SK-N-SH (cell line): ENCODE measurements at regions of chr2 and their contacts with region 1.

Region 1: DNA sequence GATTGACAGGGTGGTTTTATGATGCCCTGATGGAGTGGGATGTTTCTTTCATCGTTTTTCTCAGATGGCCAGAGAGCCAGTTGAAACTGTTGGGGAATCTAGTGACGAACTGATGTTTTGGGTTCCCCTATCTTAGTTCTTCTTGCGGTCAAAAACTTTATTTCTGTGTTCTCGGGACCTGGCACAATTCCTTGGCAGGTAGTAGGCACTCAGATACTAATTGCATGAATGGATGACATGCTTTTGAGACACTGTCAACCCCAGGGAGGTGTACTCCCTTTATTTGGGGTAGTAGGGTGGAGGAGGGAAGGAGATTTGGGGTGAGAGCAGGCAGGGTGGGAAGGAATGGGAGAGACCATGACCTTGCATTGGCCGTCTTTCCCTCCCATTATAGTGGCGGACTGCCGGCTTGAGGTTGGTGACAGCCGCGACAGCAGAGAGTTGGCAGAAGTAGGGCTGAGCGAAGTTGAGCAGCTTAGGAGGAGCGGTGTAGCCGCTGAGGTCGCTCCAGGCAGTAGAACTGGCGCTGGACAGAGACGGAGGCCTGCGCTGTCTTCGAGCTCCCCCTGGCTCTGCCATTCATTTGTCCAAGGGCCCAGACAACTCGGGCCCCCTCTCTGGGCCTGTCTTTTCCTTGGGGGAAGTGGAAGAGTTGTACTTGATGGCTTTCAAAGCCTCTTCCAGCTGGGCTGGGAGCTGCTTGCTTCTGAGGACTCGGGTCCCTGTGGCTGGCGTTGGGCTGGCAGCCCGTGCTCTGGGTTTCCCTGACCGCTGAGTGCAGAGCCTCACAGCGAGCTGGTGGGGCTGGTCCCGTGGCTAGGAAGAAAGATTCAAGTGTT is 2.6 kb downstream of the TET3 start:
- DNase-seq: peak; percentile 62
- H3K4me3 ChIP-seq: peak overlapping the region; percentile 41 to 42
- H3K27ac ChIP-seq: 0 out of 4 replicates have a peak overlapping the region, but pooled peaks of 1 of the 2 experiments have one; percentile 34
- H3K4me1 ChIP-seq: peaks cover 6 to 46% of the 10 kb centered on the region in 2 experiments; a peak in 3 of 4 replicates
- H3K27me3 ChIP-seq: no peaks in the 10 kb centered on the region
- CTCF ChIP-seq: peak; percentile 45
- EP300 ChIP-seq: no peak
- RAD21 ChIP-seq: peak; percentile 59

Region 2: GRCh38 chr2:73970850-73971471 is 16.4 kb before region 1 on chr2:
- CTCF ChIA-PET with region 1: no interaction called
- POLR2A ChIA-PET with region 1: no interaction called
- DNase-seq: peak; percentile 50
- H3K4me3 ChIP-seq: no peak overlapping the region
- H3K27ac ChIP-seq: peak overlapping the region in 1 of 2 experiments; percentile 77; a peak in 3 of 4 replicates
- H3K4me1 ChIP-seq: peaks cover 12 to 23% of the 10 kb centered on the region in 2 experiments
- H3K27me3 ChIP-seq: no peaks in the 10 kb centered on the region
- CTCF ChIP-seq: no peak
- EP300 ChIP-seq: no peak
- RAD21 ChIP-seq: no peak

Region 3: DNA sequence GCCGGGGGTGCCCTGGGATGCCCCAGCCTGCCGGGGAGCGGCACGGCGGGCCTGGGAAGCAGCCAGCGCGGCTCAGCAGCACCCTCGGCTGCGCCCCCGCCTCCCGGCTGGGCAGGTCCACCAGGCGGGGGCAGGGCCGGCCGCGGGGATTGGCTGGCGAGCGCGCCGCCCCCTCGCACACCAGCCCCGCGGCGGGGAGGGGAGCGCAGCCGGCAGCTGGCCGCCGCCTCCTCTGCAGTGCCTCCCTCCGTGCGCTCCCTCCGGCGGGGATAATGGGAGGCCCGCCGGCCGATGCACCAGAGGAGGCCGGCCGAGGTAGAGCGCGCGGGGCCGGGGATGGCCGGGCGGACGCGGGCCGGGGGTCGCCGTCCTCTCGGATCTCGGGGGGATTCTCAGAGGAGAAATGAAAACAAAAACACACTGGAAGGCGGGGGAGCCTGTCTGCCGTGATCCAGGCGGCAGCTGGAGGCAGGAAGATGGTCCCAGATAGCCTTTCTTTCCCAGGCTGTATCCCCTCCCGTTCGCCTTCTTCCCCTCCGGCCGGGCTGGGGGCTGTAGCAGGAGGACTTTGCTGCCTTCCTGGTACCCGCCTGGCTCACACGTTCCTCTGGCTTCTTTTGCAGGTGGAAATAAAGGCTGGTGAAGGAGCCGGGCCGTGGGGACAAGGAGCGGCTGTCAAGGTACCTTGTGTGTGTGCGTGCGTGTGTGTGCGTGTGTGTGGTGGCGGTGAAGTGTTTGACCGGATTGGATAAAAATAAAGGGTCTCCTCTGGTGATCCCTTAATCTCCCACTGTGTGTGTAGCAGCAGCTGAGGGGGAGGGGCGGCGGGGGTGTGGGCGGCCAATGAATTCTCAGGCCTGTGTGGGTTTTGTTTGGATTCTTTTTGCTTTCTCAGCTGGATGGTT is 15.4 kb after region 1 on chr2:
- CTCF ChIA-PET with region 1: interaction called, 6 read pairs
- POLR2A ChIA-PET with region 1: interaction called, 11 read pairs
- DNase-seq: peak; percentile 98
- H3K4me3 ChIP-seq: peak overlapping the region; percentile 62 to 84
- H3K27ac ChIP-seq: peak overlapping the region; percentile 49 to 61; a peak in 2 of 4 replicates
- H3K4me1 ChIP-seq: peaks cover 27 to 47% of the 10 kb centered on the region in 2 experiments; a peak in 3 of 4 replicates
- H3K27me3 ChIP-seq: no peaks in the 10 kb centered on the region
- CTCF ChIP-seq: no peak
- EP300 ChIP-seq: no peak
- RAD21 ChIP-seq: no peak; the same call in 1 of the 2 replicates

Region 4: GRCh38 chr2:74052732-74053597 is 65.6 kb after region 1 on chr2:
- CTCF ChIA-PET with region 1: no interaction called
- POLR2A ChIA-PET with region 1: no interaction called
- DNase-seq: no peak
- H3K4me3 ChIP-seq: no peak overlapping the region
- H3K27ac ChIP-seq: no peak overlapping the region
- H3K4me1 ChIP-seq: peaks cover 0 to 25% of the 10 kb centered on the region in 2 experiments; a peak in 1 of 4 replicates
- H3K27me3 ChIP-seq: no peaks in the 10 kb centered on the region
- CTCF ChIP-seq: no peak
- EP300 ChIP-seq: no peak
- RAD21 ChIP-seq: no peak